Activated CD4-positive, alpha-beta T cell treated with anti-CD3 and anti-CD28 coated beads for 36 hours (primary cell): ENCODE measurements at regions of chr2 and their contacts with region 1.

Region 1: DNA sequence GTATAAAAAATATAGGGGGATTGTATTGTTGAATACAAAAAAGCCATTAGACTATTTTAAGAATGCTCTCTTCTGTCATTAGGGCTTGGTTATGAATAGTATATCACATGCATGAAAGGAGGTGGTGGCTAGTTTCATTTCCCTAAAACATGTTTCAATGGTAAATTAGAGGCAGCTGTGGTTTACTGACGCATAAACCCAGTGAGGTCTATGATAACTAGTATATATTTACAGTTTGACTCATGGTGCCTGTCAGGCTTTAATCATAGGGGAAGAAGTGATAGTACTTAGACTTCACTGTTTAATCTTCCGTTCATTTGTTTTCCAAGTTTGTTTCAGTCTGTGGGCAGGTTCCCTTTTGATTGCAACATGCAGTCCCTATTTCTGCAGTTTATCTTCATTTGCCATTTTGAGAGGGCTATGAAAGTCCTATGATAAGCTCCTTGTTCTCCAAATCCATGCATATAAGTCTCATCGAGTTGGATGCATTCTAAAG is 55.1 kb upstream of the MAP4K3 start:
- DNase-seq: peak; percentile 63
- ATAC-seq: peak; percentile 95
- H3K4me3 Mint-ChIP-seq: no peak overlapping the region
- H3K27ac Mint-ChIP-seq: peak overlapping the region; percentile 53
- H3K4me1 Mint-ChIP-seq: peaks cover 44% of the 10 kb centered on the region
- H3K27me3 Mint-ChIP-seq: peaks cover 9% of the 10 kb centered on the region

Region 2: GRCh38 chr2:39216346-39217191 is 275.6 kb before region 1 on chr2:
- CTCF ChIA-PET with region 1: no interaction called
- POLR2A ChIA-PET with region 1: no interaction called
- intact Hi-C with region 1: loop called in 1 of 2 experiments (anchors 1 kb)
- DNase-seq: peak; percentile 76
- ATAC-seq: peak; percentile 70
- H3K4me3 Mint-ChIP-seq: peak overlapping the region; percentile 45
- H3K27ac Mint-ChIP-seq: peak overlapping the region; percentile 88
- H3K4me1 Mint-ChIP-seq: peaks cover 44% of the 10 kb centered on the region
- H3K27me3 Mint-ChIP-seq: no peaks in the 10 kb centered on the region

Region 3: GRCh38 chr2:39379643-39380524 is 112.3 kb before region 1 on chr2:
- CTCF ChIA-PET with region 1: no interaction called
- POLR2A ChIA-PET with region 1: interaction called, 6 read pairs
- intact Hi-C with region 1: loop called (anchors 5 kb)
- DNase-seq: no peak
- ATAC-seq: peak; percentile 66
- H3K4me3 Mint-ChIP-seq: no peak overlapping the region
- H3K27ac Mint-ChIP-seq: no peak overlapping the region
- H3K4me1 Mint-ChIP-seq: peaks cover 24% of the 10 kb centered on the region
- H3K27me3 Mint-ChIP-seq: no peaks in the 10 kb centered on the region

Region 4: DNA sequence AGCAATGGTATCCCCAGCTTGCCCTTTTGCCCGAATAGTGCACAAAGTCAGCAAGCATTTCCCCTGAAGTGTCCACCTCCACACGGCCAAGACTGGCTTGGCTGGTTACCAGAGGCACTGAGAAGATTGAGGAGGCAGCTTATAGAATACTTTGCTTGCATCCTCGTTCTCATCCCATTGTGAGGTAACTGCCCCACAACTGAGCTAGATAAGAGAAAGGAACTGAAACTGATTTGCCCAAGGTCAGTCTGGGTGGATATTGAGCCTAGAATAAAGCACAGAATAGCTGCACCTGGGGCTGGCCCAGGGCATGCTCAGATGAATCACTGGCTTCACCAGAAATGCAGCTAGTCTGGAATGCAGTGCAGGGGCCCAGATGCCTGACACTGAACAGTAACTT is 22.3 kb before region 1 on chr2:
- CTCF ChIA-PET with region 1: interaction called, 4 read pairs
- POLR2A ChIA-PET with region 1: interaction called, 3 read pairs
- intact Hi-C with region 1: loop called in 1 of 2 experiments (anchors 1 kb)
- DNase-seq: peak; percentile 43
- ATAC-seq: peak; percentile 63
- H3K4me3 Mint-ChIP-seq: no peak overlapping the region
- H3K27ac Mint-ChIP-seq: no peak overlapping the region
- H3K4me1 Mint-ChIP-seq: peaks cover 36% of the 10 kb centered on the region
- H3K27me3 Mint-ChIP-seq: no peaks in the 10 kb centered on the region

Region 5: GRCh38 chr2:39513641-39514094 is 21.5 kb after region 1 on chr2:
- CTCF ChIA-PET with region 1: interaction called, 5 read pairs
- POLR2A ChIA-PET with region 1: no interaction called
- intact Hi-C with region 1: loop called (anchors 1 kb)
- DNase-seq: peak; percentile 84
- ATAC-seq: peak; percentile 83
- H3K4me3 Mint-ChIP-seq: peak overlapping the region; percentile 21
- H3K27ac Mint-ChIP-seq: peak overlapping the region; percentile 83
- H3K4me1 Mint-ChIP-seq: peaks cover 33% of the 10 kb centered on the region
- H3K27me3 Mint-ChIP-seq: peaks cover 3% of the 10 kb centered on the region

Region 6: DNA sequence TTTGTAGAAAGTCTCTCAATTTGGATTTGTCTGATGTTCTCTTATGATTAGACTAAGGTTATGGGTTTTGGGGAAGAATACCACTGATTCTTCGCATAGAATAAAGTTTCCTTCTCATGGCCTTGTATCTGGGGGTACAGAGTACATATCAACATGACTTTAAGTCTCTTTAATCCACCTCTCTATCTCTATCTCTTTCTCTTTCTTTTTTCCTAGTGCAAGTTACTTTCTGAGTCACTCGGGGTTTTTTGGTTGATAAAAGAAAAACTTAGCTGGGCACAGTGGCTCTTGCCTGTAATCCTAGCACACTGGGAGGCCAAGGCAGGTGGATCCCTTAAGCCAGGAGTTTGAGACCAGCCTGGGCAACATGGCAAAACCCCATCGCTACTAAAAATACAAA is 45.0 kb after region 1 on chr2:
- CTCF ChIA-PET with region 1: no interaction called
- POLR2A ChIA-PET with region 1: no interaction called
- intact Hi-C with region 1: loop called (anchors 1 to 2 kb)
- DNase-seq: peak; percentile 7
- ATAC-seq: peak; percentile 82
- H3K4me3 Mint-ChIP-seq: no peak overlapping the region
- H3K27ac Mint-ChIP-seq: no peak overlapping the region
- H3K4me1 Mint-ChIP-seq: peaks cover 13% of the 10 kb centered on the region
- H3K27me3 Mint-ChIP-seq: peaks cover 3% of the 10 kb centered on the region